Activated CD4-positive, alpha-beta memory T cell treated with anti-CD3 and anti-CD28 coated beads for 36 hours (primary cell): ENCODE measurements at regions of chr17 and their contacts with region 1.

Region 1: GRCh38 chr17:2592971-2593820 is at the start of gene PAFAH1B1:
- DNase-seq: peak; percentile 96
- H3K4me3 Mint-ChIP-seq: peak within 1 kb of the TSS; percentile 91
- H3K27ac Mint-ChIP-seq: peak within 1 kb of the TSS; percentile 83
- H3K4me1 Mint-ChIP-seq: peaks cover 27% of the 10 kb centered on the region
- H3K27me3 Mint-ChIP-seq: no peaks in the 10 kb centered on the region
- total RNA-seq, gene PAFAH1B1: 170 to 173 TPM

Region 2: DNA sequence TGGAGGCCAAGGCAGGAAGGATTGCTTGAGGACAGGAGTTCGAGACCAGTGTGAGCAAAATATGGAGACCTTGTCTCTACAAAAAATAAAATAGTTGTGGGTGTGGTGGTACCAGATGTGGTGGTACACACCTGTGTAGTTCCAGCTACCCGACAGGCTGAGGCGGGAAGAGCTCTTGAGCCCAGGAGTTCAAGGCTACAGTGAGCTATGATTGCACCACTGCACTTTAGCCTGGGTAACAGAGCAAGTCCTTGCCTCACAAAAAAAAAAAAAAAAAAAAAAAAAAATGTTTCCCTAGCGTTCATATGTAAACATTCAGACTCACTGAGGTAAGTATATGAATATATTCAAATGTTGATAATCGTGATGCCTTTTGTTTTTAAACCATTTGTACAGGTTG is 78.8 kb after region 1 on chr17:
- CTCF ChIA-PET with region 1: interaction called, 7 read pairs
- POLR2A ChIA-PET with region 1: interaction called, 3 read pairs
- intact Hi-C with region 1: loop called (anchors 2 kb)
- DNase-seq: no peak
- H3K4me3 Mint-ChIP-seq: no peak overlapping the region
- H3K27ac Mint-ChIP-seq: no peak overlapping the region
- H3K4me1 Mint-ChIP-seq: peaks cover 7% of the 10 kb centered on the region
- H3K27me3 Mint-ChIP-seq: no peaks in the 10 kb centered on the region